ENCODE measurements at regions of chr7 and their contacts with region 1.

Region 1: DNA sequence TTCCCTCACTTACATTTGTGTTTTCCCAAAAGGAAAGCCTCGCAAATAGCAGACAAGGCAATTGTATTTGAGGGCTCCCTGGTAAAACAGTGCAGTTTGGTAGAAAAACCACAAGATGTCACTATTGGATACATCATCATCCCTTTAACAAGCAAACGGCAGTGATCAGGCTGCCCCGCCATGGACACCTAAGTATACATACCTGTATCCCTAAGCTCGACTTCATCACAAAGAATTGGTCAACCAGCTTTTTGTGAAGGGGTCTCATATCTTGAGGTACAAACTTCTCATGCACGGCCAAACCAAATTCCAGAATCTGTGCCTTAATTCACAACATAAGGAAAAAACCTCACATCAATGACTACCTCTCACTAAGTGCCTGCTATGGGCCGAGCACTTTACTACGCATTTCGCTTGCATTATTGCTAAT is 179.5 kb upstream of the IMMP2L start:
- DNase-seq: peak in 2 of 3 donors; percentile 32 to 63
- ATAC-seq: peak; percentile 95
- H3K4me3 ChIP-seq: no peak overlapping the region
- H3K4me1 ChIP-seq: no peaks in the 10 kb centered on the region
- CTCF ChIP-seq: peak; percentile 62

Region 2: GRCh38 chr7:111903797-111904196 is 162.0 kb after region 1 on chr7:
- intact Hi-C with region 1: no loop called
- DNase-seq: no peak
- ATAC-seq: no peak
- H3K4me3 ChIP-seq: no peak overlapping the region
- H3K4me1 ChIP-seq: no peaks in the 10 kb centered on the region
- CTCF ChIP-seq: no peak

Region 3: GRCh38 chr7:112495810-112496462 is 754.1 kb after region 1 on chr7:
- intact Hi-C with region 1: loop called in 1 of 2 experiments (anchors 10 kb)
- DNase-seq: peak in 1 of 3 donors; percentile 70
- ATAC-seq: peak; percentile 75
- H3K4me3 ChIP-seq: no peak overlapping the region
- H3K4me1 ChIP-seq: no peaks in the 10 kb centered on the region
- CTCF ChIP-seq: no peak